ENCODE measurements at regions of chr12 and their contacts with region 1.

Region 1: DNA sequence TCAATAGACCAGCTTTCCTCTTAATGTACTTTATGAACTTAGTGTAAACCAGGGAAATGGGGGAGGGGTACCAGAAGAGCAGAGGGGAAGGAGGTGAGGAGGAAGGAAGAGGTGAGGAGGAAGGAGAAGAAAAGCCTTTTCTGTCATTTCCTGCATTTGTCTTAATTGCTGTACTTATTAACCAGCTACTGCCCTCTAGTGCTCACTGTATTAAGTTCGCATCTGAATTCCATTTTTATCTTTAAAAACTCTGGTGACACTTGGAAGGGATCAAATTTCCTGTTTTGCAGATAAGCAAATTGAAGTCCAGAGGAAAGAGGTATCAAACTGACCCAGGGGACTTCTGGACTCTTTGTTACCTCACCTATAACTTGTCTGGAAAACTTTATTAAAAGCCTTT is 22.2 kb downstream of the MANSC1 start:
- DNase-seq: peak in 4 of 42 donors; percentile 10 to 58 (median 30)

Region 2: DNA sequence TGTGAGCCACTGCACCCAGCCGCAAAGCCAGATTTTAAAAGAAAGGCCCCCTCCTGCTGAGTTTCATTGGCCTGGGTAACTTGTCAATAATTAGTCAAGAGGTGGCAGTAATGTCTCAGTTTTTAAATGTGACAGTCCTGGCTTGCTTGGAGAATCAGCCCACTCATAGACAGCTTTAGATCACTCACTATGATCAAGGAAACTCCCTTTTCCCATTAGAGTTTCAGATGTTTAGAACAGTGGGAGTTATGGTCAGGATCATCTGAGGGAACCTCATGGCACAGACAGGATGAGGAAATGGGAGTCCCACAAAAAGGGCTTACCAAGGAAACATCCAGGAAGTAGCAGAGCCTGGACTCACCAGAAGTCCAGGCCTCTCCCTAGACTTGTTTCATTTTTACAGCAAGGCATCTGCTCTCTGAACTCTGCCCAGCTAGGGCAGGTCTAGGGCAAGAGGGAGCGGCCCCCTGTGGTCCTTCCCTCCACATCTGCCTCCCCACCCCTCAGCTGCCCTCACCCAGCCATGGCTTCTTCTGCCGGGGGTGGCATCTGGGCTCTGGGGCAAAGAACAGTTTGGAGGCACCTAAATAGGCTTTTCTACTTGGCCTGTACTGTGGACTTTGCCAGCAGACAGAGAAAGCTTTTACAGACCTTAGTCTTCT is 245.8 kb before region 1 on chr12:
- intact Hi-C with region 1: loop called (anchors 5 kb)
- DNase-seq: peak in 15 of 42 donors; percentile 15 to 63 (median 31)

Region 3: DNA sequence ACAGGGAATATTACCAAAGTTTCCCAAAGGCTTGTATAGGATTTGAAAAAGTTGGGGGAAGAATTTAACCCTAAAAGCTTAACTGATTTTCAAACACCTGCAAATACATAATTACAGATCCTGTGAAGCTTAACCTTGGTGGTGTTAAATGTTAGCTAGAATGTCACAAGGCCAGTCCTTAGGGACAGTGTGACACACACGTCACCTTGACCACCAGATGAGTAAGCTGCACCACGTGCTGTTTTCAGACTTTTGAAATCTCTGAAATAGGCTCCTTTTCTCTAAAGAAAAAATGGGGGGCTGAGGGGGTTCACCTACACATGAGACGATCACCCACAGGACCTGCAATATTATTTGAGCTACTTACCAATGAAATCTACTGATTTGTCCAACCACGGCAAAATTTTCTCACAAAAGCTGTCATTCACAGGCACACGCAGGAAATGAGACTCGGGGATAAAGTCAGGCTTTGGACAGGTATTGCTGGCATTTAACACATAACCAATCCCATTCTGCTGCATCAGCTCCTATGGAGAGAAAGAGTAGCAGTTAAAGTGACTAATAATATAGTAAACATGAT is 158.9 kb after region 1 on chr12:
- intact Hi-C with region 1: no loop called
- DNase-seq: no peak